Naive thymus-derived CD4-positive, alpha-beta T cell (primary cell): ENCODE measurements at regions of chr19 and their contacts with region 1.

Region 1: DNA sequence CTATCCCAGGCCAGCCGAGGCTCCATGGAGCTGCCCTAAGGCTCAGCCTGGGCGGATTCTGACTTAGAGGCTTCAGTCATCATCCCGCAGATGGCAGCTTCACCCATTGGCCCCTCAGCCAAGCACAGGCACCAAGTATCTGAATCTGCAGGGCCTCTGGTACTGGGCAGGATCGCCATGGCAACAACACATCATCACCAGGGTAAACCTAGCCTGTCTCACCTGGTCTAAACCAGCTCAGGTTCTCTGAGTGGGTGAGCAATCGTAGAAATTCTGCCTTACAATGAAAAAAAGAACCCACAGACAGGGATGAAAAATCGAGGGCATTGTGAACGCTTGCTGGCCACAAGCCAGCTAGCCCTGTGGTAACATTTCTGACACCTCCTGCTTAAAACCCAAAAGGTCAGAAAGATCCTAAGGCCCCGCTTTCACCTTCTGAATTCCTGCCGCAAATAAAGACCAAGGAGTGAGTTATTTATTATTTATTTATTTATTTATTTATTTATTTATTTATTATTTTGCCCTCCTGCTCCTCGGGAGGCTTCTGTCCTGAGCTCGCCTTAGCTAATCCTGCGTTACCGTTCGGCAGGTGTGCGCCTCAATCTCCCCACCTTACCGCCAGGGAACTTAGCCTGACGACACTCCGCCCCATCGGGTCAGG is 12.0 kb upstream of the CEACAM21 start:
- DNase-seq: peak in 6 of 9 donors; percentile 50 to 86 (median 72)
- ATAC-seq: peak; percentile 86
- H3K4me3 ChIP-seq: peak overlapping the region; percentile 49
- H3K4me3 Mint-ChIP-seq: peak overlapping the region; percentile 73 to 93 (median 87)
- H3K27ac ChIP-seq: peak overlapping the region; percentile 74
- H3K27ac Mint-ChIP-seq: peak overlapping the region; percentile 70 to 98 (median 92)
- H3K4me1 ChIP-seq: peaks cover 38 to 40% of the 10 kb centered on the region in 2 donors
- H3K4me1 Mint-ChIP-seq: peaks cover 55 to 95% (median 88%) of the 10 kb centered on the region in 7 donors
- H3K27me3 ChIP-seq: no peaks in the 10 kb centered on the region
- H3K27me3 Mint-ChIP-seq: peaks cover 0 to 8% (median 0%) of the 10 kb centered on the region in 5 donors

Region 2: DNA sequence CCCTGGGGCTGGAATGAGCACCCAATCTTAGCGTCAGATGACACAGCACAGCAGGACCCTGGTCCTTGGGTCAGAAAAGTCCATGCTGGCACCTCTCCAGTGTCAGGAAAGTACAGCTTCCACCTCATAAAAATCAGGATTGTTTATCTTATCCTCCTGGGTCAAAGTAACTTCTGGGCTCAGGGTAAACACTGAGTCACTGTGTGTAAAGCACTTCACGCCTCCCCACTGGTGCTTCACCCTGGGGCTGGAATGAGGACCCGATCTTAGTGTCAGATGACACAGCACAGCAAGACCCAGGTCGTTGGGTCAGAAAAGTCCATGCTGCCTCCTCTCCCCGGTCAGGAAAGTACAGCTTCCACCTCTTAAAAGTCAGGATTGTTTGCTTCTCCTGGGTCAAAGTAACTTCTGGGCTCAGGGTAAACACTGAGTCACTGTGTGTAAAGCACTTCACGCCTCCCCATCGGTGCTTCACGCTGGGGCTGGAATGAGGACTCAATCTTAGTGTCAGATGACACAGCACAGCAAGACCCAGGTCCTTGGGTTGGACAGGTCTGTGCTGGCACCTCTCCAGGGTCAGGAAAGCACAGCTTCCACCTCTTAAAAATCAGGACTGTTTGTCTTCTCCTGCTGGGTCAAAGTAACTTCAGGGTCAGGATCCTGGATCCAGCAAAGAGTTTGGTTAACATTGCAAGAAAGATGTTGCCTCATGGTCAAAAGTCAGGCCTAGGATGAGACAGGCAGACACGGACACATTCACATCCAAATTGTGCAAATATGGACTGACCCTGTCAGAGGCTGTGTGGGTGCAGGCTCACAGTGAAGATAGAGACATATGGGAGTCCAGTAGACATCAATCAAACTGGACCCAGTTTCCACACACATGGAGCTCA is 642.7 kb before region 1 on chr19:
- CTCF ChIA-PET with region 1: no interaction called
- POLR2A ChIA-PET with region 1: no interaction called
- intact Hi-C with region 1: no loop called
- DNase-seq: no peak
- ATAC-seq: no peak
- H3K4me3 ChIP-seq: no peak overlapping the region
- H3K4me3 Mint-ChIP-seq: no peak overlapping the region
- H3K27ac ChIP-seq: no peak overlapping the region
- H3K27ac Mint-ChIP-seq: no peak overlapping the region
- H3K4me1 ChIP-seq: no peaks in the 10 kb centered on the region
- H3K4me1 Mint-ChIP-seq: peaks cover 0 to 5% (median 0%) of the 10 kb centered on the region in 7 donors
- H3K27me3 ChIP-seq: no peaks in the 10 kb centered on the region
- H3K27me3 Mint-ChIP-seq: peaks cover 0 to 16% (median 0%) of the 10 kb centered on the region in 5 donors

Region 3: DNA sequence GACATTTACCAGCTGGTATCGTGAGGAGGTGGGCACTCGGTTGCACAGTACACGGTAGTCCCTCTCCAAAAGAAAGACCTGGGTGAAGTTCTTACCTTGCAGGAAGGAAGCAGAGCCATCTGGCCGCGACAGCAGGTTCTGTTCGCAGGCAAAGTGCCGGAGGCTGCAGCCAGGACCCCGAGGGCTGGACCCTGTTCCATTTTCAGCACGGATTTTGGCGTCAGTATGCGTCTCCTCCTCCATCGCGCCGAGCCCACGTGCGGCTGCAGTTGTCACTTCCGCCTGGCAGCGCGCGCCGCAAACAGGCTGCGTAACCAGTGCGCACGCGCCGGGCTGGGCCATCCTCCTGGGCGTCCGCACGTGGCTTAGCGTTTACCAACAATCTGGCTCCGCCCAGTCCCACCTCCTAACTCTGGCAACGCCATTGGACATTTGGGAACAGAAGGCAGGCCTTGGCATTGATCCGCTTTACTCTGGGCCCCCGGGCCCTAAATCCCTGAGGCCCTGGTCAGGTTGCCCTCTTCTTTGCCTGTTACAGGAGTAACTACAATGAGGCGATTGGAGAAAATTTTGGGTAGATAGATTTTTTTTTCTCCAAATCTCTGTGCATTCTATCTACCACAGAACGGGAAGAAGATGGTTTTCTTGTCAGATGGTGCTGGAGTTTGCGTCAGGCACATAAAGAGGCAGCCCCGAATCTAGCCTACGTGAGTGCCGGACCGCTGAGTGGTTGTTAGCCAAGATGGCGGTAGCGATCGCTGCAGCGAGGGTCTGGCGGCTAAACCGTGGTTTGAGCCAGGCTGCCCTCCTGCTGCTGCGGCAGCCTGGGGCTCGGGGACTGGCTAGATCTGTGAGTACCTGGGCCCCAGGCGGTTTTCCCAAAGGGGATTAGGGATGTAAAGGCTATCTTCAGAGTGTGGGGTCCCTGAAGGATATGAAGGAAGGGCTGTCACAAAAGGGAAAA is 166.6 kb before region 1 on chr19 and contains the starts of genes BCKDHA and EXOSC5:
- CTCF ChIA-PET with region 1: no interaction called
- POLR2A ChIA-PET with region 1: no interaction called
- intact Hi-C with region 1: loop called in 1 of 2 experiments (anchors 2 kb)
- DNase-seq: peak; percentile 96 to 100 (median 99)
- ATAC-seq: peak; percentile 99
- H3K4me3 ChIP-seq: peak within 1 kb of the TSS; percentile 96
- H3K4me3 Mint-ChIP-seq: peak within 1 kb of the TSS; percentile 95 to 99 (median 98)
- H3K27ac ChIP-seq: peak within 1 kb of the TSS; percentile 89
- H3K27ac Mint-ChIP-seq: peak within 1 kb of the TSS; percentile 99 to 100 (median 100)
- H3K4me1 ChIP-seq: peaks cover 19 to 23% of the 10 kb centered on the region in 2 donors
- H3K4me1 Mint-ChIP-seq: peaks cover 33 to 61% (median 50%) of the 10 kb centered on the region in 7 donors
- H3K27me3 ChIP-seq: no peaks in the 10 kb centered on the region
- H3K27me3 Mint-ChIP-seq: no peaks in the 10 kb centered on the region
- total RNA-seq, gene BCKDHA: 19.4 to 25.0 (median 20.5) TPM
- total RNA-seq, gene EXOSC5: 15.0 to 37.5 (median 20.6) TPM

Region 4: DNA sequence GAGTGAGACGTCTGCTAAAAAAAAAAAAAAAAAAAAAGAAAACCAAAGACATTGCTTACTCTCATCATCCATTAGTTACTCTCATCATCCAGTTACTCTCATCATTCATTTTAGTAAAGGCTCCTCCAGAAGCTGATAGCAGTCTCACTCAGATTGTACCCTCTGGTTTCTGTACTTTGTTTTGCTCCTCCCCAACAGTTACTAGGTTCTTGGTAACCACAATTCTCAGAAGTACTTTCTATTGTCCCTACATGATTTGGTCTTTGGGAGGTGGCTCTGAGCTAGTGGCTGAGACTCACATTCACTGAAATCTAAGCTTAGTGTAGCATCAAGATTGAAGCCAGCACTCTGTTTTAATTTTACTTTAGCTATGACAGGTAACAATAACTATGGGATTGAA is 106.7 kb before region 1 on chr19:
- CTCF ChIA-PET with region 1: interaction called, 11 read pairs
- POLR2A ChIA-PET with region 1: no interaction called
- intact Hi-C with region 1: no loop called
- DNase-seq: peak in 5 of 9 donors; percentile 34 to 65 (median 47)
- ATAC-seq: peak; percentile 92
- H3K4me3 ChIP-seq: no peak overlapping the region
- H3K4me3 Mint-ChIP-seq: peak overlapping the region in 8 of 10 donors; percentile 27 to 63 (median 52)
- H3K27ac ChIP-seq: peak overlapping the region; percentile 6
- H3K27ac Mint-ChIP-seq: peak overlapping the region; percentile 39 to 95 (median 76)
- H3K4me1 ChIP-seq: peaks cover 0 to 17% of the 10 kb centered on the region in 2 donors
- H3K4me1 Mint-ChIP-seq: peaks cover 7 to 45% (median 21%) of the 10 kb centered on the region in 7 donors
- H3K27me3 ChIP-seq: no peaks in the 10 kb centered on the region
- H3K27me3 Mint-ChIP-seq: peaks cover 0 to 25% (median 9%) of the 10 kb centered on the region in 5 donors

Region 5: DNA sequence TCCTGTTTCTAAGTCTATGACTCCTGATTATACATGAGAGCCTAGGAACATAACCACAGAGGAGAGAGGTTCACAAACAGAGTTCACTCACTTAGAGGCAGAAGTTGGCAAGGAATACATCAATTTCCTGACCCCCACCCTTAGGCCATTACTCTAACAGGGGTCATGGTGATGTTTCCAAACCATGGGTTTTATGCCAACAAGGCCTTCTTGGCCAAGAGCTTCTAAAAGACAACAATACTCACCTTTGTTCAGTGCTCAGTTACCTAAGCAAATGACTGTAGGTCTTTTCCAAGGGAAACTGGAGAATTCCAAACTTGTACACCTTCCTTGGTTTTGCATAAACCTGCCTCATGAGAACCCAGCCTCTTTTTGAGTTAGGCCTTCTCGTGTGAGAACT is 68.4 kb before region 1 on chr19:
- CTCF ChIA-PET with region 1: no interaction called
- POLR2A ChIA-PET with region 1: no interaction called
- intact Hi-C with region 1: no loop called
- DNase-seq: no peak
- ATAC-seq: no peak
- H3K4me3 ChIP-seq: no peak overlapping the region
- H3K4me3 Mint-ChIP-seq: no peak overlapping the region
- H3K27ac ChIP-seq: no peak overlapping the region
- H3K27ac Mint-ChIP-seq: no peak overlapping the region
- H3K4me1 ChIP-seq: no peaks in the 10 kb centered on the region
- H3K4me1 Mint-ChIP-seq: peaks cover 0 to 2% (median 0%) of the 10 kb centered on the region in 7 donors
- H3K27me3 ChIP-seq: no peaks in the 10 kb centered on the region
- H3K27me3 Mint-ChIP-seq: peaks cover 8 to 22% (median 21%) of the 10 kb centered on the region in 5 donors

Region 6: GRCh38 chr19:41531438-41532311 is 32.3 kb before region 1 on chr19:
- CTCF ChIA-PET with region 1: interaction called, 384 read pairs
- POLR2A ChIA-PET with region 1: interaction called, 518 read pairs
- intact Hi-C with region 1: loop called (anchors 5 kb)
- DNase-seq: peak; percentile 59 to 95 (median 93)
- ATAC-seq: peak; percentile 95
- H3K4me3 ChIP-seq: peak overlapping the region; percentile 46
- H3K4me3 Mint-ChIP-seq: peak overlapping the region; percentile 77 to 98 (median 84)
- H3K27ac ChIP-seq: peak overlapping the region; percentile 75
- H3K27ac Mint-ChIP-seq: peak overlapping the region; percentile 83 to 98 (median 92)
- H3K4me1 ChIP-seq: peaks cover 32 to 46% of the 10 kb centered on the region in 2 donors
- H3K4me1 Mint-ChIP-seq: peaks cover 50 to 70% (median 64%) of the 10 kb centered on the region in 7 donors
- H3K27me3 ChIP-seq: no peaks in the 10 kb centered on the region
- H3K27me3 Mint-ChIP-seq: peaks cover 0 to 7% (median 0%) of the 10 kb centered on the region in 5 donors

Region 7: DNA sequence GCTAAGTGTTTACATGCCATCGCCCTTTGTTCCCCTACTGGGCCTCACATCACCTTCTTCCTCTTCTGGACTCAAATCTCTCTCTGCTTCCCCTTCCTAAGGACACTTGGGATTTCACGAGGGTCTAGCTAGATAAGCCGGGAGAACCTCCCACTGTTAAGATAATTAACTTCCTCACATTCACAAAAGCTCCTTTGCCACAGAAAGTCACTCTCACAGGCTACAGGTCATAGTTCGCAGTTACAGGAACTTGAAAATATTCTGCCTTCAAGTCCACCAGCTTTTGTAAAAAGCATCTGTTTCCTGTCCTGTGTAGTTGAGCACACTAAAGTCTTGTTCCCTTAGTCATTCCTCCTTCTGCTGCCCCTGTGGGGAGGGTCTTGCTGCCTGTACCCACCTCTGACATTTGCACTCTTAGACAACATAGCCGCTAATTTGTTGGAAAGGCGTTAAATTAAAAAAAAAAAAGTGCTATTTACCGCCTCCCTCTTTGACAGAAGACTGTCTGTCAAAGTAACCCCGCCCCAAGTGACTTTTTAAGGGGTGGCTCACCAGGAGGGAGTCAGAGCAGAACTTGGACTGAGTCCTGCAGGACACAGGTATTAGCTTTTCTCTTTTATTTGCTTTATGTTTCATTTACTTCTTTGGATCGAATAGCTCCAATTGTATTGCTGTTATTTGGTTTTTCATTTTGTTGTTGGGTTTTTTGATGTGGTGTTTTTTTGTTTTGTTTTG is 14.9 kb before region 1 on chr19:
- CTCF ChIA-PET with region 1: interaction called, 384 read pairs
- POLR2A ChIA-PET with region 1: interaction called, 518 read pairs
- intact Hi-C with region 1: loop called (anchors 1 kb)
- DNase-seq: peak in 8 of 9 donors; percentile 68 to 82 (median 78)
- ATAC-seq: peak; percentile 82
- H3K4me3 ChIP-seq: peak overlapping the region; percentile 77
- H3K4me3 Mint-ChIP-seq: peak overlapping the region; percentile 91 to 100 (median 98)
- H3K27ac ChIP-seq: peak overlapping the region; percentile 88
- H3K27ac Mint-ChIP-seq: peak overlapping the region; percentile 92 to 97 (median 96)
- H3K4me1 ChIP-seq: peaks cover 43 to 53% of the 10 kb centered on the region in 2 donors
- H3K4me1 Mint-ChIP-seq: peaks cover 58 to 72% (median 61%) of the 10 kb centered on the region in 7 donors
- H3K27me3 ChIP-seq: no peaks in the 10 kb centered on the region
- H3K27me3 Mint-ChIP-seq: no peaks in the 10 kb centered on the region